CD4-positive, alpha-beta T cell (primary cell): ENCODE measurements at regions of chr5 and their contacts with region 1.

Region 1: DNA sequence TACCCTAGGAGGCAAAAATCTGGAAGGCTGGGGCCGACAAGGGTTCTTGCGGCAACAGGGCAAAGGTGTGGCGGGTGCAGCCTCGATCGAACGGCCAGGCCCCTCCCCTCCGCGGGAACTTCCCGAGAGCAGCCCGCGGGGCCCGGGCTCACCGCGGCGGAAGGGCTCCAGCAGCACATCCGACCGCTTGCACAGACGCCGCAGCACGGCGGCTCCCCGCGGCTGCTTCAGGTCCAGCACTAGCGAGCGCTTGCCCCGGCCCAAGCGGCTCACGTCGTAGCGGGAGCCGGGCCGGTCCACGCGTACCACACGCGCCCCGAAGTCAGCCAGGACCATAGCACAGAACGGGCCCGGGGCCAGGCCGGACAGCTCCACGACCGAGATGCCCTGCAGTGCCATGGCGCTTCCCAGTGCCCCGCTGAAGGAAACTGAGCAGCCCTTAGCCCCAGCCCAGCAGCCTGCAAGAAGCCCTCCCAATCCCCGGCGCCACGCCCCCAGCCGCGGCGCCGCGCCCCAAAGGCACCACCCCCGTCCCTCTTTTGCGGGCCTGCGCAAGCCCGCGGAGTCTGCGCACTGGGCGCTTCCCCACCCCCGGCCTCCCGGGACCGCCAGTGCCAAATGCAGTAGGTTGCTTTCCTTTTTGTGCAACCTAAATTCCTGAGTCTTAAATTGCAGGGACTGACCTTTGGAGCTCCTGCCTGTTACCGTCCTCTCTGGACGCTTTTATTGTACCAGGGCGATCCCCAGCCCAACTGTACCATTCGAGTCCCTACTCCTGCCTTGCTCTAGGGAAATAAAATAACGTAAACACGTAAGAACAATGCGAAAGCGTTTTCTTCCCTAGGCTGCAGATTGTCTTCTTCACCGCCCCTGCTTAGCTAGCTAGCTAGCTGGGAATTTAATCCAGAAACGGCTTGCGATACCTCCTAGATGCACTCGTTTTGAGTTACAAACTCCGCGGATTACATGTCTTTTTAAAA is at the start of gene AMACR:
- DNase-seq: peak; percentile 62 to 97 (median 89)
- ATAC-seq: peak; percentile 95
- H3K4me3 ChIP-seq: peak within 1 kb of the TSS; percentile 82
- H3K4me3 Mint-ChIP-seq: peak within 1 kb of the TSS; percentile 96
- H3K27ac ChIP-seq: peak within 1 kb of the TSS; percentile 79 to 81
- H3K27ac Mint-ChIP-seq: peak within 1 kb of the TSS; percentile 95
- H3K4me1 ChIP-seq: peaks cover 9% of the 10 kb centered on the region
- H3K4me1 Mint-ChIP-seq: peaks cover 41% of the 10 kb centered on the region
- H3K27me3 ChIP-seq: no peaks in the 10 kb centered on the region
- H3K27me3 Mint-ChIP-seq: no peaks in the 10 kb centered on the region
- CTCF ChIP-seq: no peak
- total RNA-seq, gene AMACR: 1.3 to 1.4 TPM

Region 2: GRCh38 chr5:32174011-32174870 is 1833.7 kb before region 1 on chr5 and contains the start of gene GOLPH3:
- CTCF ChIA-PET with region 1: no interaction called
- POLR2A ChIA-PET with region 1: no interaction called
- intact Hi-C with region 1: loop called in 1 of 2 experiments (anchors 5 kb)
- DNase-seq: peak; percentile 84 to 94 (median 91)
- ATAC-seq: peak; percentile 84
- H3K4me3 ChIP-seq: peak within 1 kb of the TSS; percentile 90
- H3K4me3 Mint-ChIP-seq: peak within 1 kb of the TSS; percentile 99
- H3K27ac ChIP-seq: peak within 1 kb of the TSS; percentile 89 to 95
- H3K27ac Mint-ChIP-seq: peak within 1 kb of the TSS; percentile 95
- H3K4me1 ChIP-seq: peaks cover 18% of the 10 kb centered on the region
- H3K4me1 Mint-ChIP-seq: peaks cover 39% of the 10 kb centered on the region
- H3K27me3 ChIP-seq: no peaks in the 10 kb centered on the region
- H3K27me3 Mint-ChIP-seq: peaks cover 6% of the 10 kb centered on the region
- CTCF ChIP-seq: no peak
- total RNA-seq, gene GOLPH3: 52.0 to 55.4 TPM

Region 3: GRCh38 chr5:32531885-32532520 is 1475.9 kb before region 1 on chr5:
- CTCF ChIA-PET with region 1: no interaction called
- POLR2A ChIA-PET with region 1: no interaction called
- intact Hi-C with region 1: loop called in 1 of 2 experiments (anchors 5 kb)
- DNase-seq: peak; percentile 27 to 86 (median 45)
- ATAC-seq: peak; percentile 74
- H3K4me3 ChIP-seq: peak overlapping the region; percentile 53
- H3K4me3 Mint-ChIP-seq: peak overlapping the region; percentile 87
- H3K27ac ChIP-seq: peak overlapping the region; percentile 76 to 88
- H3K27ac Mint-ChIP-seq: peak overlapping the region; percentile 94
- H3K4me1 ChIP-seq: peaks cover 36% of the 10 kb centered on the region
- H3K4me1 Mint-ChIP-seq: peaks cover 53% of the 10 kb centered on the region
- H3K27me3 ChIP-seq: no peaks in the 10 kb centered on the region
- H3K27me3 Mint-ChIP-seq: no peaks in the 10 kb centered on the region
- CTCF ChIP-seq: no peak

Region 4: DNA sequence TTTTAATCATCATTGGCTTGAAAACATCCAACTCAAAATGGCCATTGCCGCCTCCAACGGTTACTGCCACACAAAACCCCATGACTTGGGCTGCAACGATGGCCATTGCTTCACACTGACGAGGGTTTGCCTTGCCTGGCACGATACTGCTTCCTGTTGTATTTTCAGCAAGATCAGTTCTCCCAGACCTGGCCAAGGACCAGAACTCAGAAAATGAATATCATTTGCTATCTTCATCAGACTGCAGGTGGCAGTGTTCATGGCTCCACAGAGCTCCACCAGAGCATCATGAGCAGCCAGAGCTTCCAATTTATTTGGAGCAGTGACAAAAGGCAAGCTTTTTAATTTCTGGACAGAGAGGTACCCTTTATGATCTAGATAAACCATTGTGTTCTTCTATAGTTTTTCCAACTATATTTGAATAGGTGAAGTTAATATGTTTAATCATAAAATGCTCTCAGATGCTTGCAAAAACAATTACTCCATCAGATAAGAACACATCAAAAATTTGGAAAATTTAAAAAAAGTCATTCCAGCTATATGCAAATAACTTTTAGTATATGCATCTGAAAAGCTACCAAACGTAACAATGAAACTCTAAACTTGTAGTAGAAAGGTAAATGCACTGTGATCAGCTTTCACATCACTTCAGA is 10.5 kb before region 1 on chr5:
- CTCF ChIA-PET with region 1: no interaction called
- POLR2A ChIA-PET with region 1: interaction called, 18 read pairs
- intact Hi-C with region 1: no loop called
- DNase-seq: peak in 8 of 14 experiments; percentile 3 to 68 (median 22)
- ATAC-seq: peak; percentile 55
- H3K4me3 ChIP-seq: no peak overlapping the region
- H3K4me3 Mint-ChIP-seq: no peak overlapping the region
- H3K27ac ChIP-seq: no peak overlapping the region
- H3K27ac Mint-ChIP-seq: no peak overlapping the region
- H3K4me1 ChIP-seq: peaks cover 3% of the 10 kb centered on the region
- H3K4me1 Mint-ChIP-seq: peaks cover 6% of the 10 kb centered on the region
- H3K27me3 ChIP-seq: no peaks in the 10 kb centered on the region
- H3K27me3 Mint-ChIP-seq: no peaks in the 10 kb centered on the region
- CTCF ChIP-seq: peak; percentile 75

Region 5: DNA sequence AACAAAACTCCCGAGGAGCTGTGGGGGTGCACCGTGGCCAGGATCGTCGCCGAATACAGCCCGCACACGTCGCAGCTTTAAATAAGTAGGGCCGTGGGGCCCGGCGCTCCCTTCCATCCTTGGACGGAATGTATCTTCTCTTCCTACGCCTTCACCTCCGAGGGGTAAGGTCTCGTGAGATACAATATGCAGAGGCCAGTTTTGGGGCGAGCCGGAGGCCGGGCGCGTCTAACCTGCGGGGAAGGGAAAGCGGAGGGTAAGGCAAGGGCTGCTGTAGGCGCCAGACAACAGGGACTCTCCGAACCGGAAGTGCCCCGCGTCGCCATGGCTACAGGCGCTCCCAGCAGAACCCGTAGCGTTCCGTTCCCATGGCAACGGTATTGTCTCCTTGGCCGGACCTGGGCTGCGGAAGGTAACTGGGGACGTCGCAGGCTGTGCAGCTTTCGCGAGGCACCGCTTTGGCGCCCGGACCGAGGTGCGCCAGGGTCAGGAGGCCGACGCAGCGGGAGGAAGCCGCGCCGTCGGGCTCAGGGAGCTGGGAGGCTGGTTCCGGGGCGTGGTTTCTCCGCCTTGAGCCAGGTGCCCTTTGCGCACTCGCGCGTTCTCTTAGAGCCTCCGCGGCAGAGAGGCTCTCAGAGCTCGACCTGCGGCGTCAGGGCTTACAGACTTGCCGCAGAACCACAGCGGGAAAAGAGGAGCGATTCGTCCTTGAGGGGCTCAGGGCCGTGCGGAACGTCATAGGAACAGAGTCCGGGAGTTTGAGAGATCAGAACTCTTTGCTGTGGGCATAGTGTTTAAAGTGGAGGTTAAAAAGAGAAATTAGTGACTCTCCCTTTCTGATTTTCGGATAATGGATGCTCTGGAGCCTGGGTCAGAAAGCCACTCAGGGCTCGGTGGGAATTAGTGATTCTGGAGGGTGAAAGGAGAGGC is 831.1 kb after region 1 on chr5 and contains the start of gene TTC23L:
- CTCF ChIA-PET with region 1: no interaction called
- POLR2A ChIA-PET with region 1: no interaction called
- intact Hi-C with region 1: loop called in 1 of 2 experiments (anchors 5 kb)
- DNase-seq: peak; percentile 84 to 98 (median 87)
- ATAC-seq: peak; percentile 89
- H3K4me3 ChIP-seq: peak within 1 kb of the TSS; percentile 78
- H3K4me3 Mint-ChIP-seq: peak within 1 kb of the TSS; percentile 95
- H3K27ac ChIP-seq: peak within 1 kb of the TSS; percentile 63 to 76
- H3K27ac Mint-ChIP-seq: peak within 1 kb of the TSS; percentile 88
- H3K4me1 ChIP-seq: peaks cover 16% of the 10 kb centered on the region
- H3K4me1 Mint-ChIP-seq: peaks cover 17% of the 10 kb centered on the region
- H3K27me3 ChIP-seq: no peaks in the 10 kb centered on the region
- H3K27me3 Mint-ChIP-seq: peaks cover 8% of the 10 kb centered on the region
- CTCF ChIP-seq: no peak
- total RNA-seq, gene TTC23L: 0.20 TPM in 1 of 2 experiments, not detected in the other

Region 6: GRCh38 chr5:34929150-34929719 is 921.3 kb after region 1 on chr5 and contains the start of gene DNAJC21:
- CTCF ChIA-PET with region 1: no interaction called
- POLR2A ChIA-PET with region 1: interaction called, 10 read pairs
- intact Hi-C with region 1: loop called in 1 of 2 experiments (anchors 2 kb)
- DNase-seq: peak; percentile 94 to 99 (median 97)
- ATAC-seq: peak; percentile 89
- H3K4me3 ChIP-seq: peak within 1 kb of the TSS; percentile 88
- H3K4me3 Mint-ChIP-seq: peak within 1 kb of the TSS; percentile 99
- H3K27ac ChIP-seq: peak within 1 kb of the TSS; percentile 39 to 72
- H3K27ac Mint-ChIP-seq: peak within 1 kb of the TSS; percentile 95
- H3K4me1 ChIP-seq: peaks cover 21% of the 10 kb centered on the region
- H3K4me1 Mint-ChIP-seq: peaks cover 37% of the 10 kb centered on the region
- H3K27me3 ChIP-seq: no peaks in the 10 kb centered on the region
- H3K27me3 Mint-ChIP-seq: no peaks in the 10 kb centered on the region
- CTCF ChIP-seq: no peak
- total RNA-seq, gene DNAJC21: 47.9 to 50.4 TPM